Ascending aorta (tissue), 2 donors: ENCODE measurements at regions of chr19 and their contacts with region 1.

Region 1: DNA sequence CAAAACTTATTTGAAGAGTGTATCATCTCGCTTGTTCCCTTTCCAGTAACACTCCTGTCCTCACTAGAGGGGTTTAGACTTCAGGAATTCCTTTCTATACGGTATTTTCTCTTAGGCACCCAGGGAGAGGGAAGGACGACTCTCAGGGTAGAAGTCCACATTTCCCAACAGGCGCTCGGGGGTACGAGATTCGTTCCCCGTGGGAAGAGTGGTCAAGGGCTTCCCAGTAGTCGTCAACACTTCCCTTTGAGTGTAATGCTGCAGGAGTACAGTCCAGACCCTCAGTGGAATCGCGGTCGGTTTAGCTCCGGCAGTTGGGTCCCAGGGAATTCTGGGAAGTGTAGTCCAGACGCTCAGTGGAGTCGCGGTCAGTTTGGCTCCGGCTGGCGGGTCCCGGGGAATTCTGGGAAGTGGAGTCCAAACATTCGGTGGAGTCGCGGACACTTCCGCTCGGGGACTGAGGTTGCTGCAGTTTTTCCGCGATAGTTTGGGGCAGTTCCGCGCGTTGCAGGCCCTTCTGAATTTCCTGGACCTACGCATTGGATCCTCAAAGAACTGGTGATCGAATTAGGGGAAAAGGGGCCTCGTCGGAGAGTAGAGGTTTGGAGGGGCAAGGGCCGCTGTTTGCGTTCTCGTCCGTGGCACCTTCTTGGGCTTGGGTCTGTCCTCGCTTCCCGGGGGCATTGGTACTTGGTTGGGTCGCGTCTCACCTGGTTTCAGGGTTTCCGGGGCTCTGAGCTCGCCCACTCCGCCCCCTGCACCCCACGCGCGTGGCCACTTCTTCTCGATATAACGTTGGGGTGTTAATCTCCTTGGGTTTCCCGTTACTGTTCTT is at the start of gene ZNF224:
- DNase-seq: peak; percentile 66 to 95
- H3K4me3 ChIP-seq: peak within 1 kb of the TSS; percentile 80 to 86
- H3K27ac ChIP-seq: peak within 1 kb of the TSS; percentile 66 to 67
- H3K4me1 ChIP-seq: no peaks in the 10 kb centered on the region
- H3K27me3 ChIP-seq: no peaks in the 10 kb centered on the region
- CTCF ChIP-seq: no peak
- total RNA-seq, gene ZNF224: 119 TPM

Region 2: GRCh38 chr19:44071824-44072542 is 22.2 kb before region 1 on chr19 and contains the start of gene ZNF284:
- intact Hi-C with region 1: loop called (anchors 1 kb)
- DNase-seq: peak; percentile 54 to 92
- H3K4me3 ChIP-seq: peak within 1 kb of the TSS; percentile 44 to 79
- H3K27ac ChIP-seq: peak within 1 kb of the TSS; percentile 12 to 48
- H3K4me1 ChIP-seq: peaks cover 0 to 9% of the 10 kb centered on the region in 2 donors
- H3K27me3 ChIP-seq: no peaks in the 10 kb centered on the region
- CTCF ChIP-seq: no peak
- total RNA-seq, gene ZNF284: 0.21 TPM

Region 3: DNA sequence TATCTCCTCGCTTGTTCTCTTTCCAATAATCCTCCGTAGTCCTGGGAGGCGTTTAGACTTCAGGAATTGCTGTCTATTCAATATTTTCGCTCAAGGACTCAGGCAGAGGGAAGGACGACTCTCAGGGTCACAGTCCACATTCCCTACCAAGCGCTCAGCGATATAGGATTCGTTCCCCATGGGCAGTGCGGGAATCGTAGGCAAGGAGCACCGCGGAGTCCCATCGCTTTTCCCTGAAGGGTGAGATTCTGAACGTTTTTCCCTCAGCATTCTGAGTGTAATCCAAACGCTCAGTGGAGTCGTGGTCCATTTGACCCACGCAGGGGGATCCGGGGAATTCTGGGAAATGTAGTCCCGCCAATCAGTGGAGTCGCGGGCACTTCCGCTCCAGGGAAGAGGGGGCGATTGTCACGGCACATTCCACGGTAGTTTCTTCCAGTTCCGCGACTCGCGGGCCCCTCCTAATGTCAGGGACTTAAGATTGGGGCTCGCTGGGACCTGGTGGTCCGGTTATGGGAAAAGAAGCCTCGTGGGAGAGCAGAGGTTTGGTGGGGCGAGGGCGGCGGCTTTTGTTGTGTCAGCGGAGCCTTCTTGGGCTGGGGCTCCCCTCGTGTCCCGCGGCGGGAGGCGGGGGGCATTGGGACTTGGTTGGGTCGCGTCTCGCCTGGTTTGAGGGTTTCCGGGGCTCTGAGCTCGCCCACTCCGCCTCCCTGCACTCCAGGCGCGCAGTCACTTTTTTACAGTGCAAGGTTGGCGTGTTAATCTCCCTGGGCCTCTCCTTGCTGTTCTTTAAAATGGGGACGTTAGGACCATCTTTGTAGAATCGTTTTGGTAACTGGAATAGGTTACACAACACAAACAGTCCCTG is 47.3 kb after region 1 on chr19 and contains the start of gene ZNF234:
- intact Hi-C with region 1: loop called (anchors 1 kb)
- DNase-seq: peak; percentile 35 to 88
- H3K4me3 ChIP-seq: peak within 1 kb of the TSS; percentile 69 to 96
- H3K27ac ChIP-seq: peak within 1 kb of the TSS; percentile 59 to 80
- H3K4me1 ChIP-seq: peaks cover 0 to 10% of the 10 kb centered on the region in 2 donors
- H3K27me3 ChIP-seq: no peaks in the 10 kb centered on the region
- CTCF ChIP-seq: no peak
- total RNA-seq, gene ZNF234: 7.9 TPM

Region 4: GRCh38 chr19:44164673-44165512 is 70.7 kb after region 1 on chr19 and contains the start of gene ZNF226:
- intact Hi-C with region 1: loop called (anchors 1 kb)
- DNase-seq: peak; percentile 82 to 96
- H3K4me3 ChIP-seq: peak within 1 kb of the TSS; percentile 63 to 80
- H3K27ac ChIP-seq: peak within 1 kb of the TSS; percentile 88 to 89
- H3K4me1 ChIP-seq: peaks cover 0 to 6% of the 10 kb centered on the region in 2 donors
- H3K27me3 ChIP-seq: no peaks in the 10 kb centered on the region
- CTCF ChIP-seq: no peak
- total RNA-seq, gene ZNF226: 4.7 TPM

Region 5: GRCh38 chr19:44356383-44357111 is 262.4 kb after region 1 on chr19 and contains the start of gene ZNF112:
- intact Hi-C with region 1: loop called (anchors 5 kb)
- DNase-seq: peak; percentile 41 to 90
- H3K4me3 ChIP-seq: peak within 1 kb of the TSS; percentile 69 to 73
- H3K27ac ChIP-seq: peak within 1 kb of the TSS; percentile 33 to 56
- H3K4me1 ChIP-seq: peaks cover 0 to 5% of the 10 kb centered on the region in 2 donors
- H3K27me3 ChIP-seq: no peaks in the 10 kb centered on the region
- CTCF ChIP-seq: no peak
- total RNA-seq, gene ZNF112: 0.11 TPM